ENCODE measurements at regions of chr10 and their contacts with region 1.

Region 1: GRCh38 chr10:69092959-69093850 is 5.3 kb downstream of the SRGN start:
- DNase-seq: peak; percentile 64
- CTCF ChIP-seq: peak; percentile 58

Region 2: GRCh38 chr10:68988530-68989316 is 104.5 kb before region 1 on chr10 and contains the start of gene KIFBP:
- CTCF ChIA-PET with region 1: interaction called, 14 read pairs
- POLR2A ChIA-PET with region 1: interaction called, 8 read pairs
- DNase-seq: peak; percentile 95
- CTCF ChIP-seq: peak; percentile 49

Region 3: DNA sequence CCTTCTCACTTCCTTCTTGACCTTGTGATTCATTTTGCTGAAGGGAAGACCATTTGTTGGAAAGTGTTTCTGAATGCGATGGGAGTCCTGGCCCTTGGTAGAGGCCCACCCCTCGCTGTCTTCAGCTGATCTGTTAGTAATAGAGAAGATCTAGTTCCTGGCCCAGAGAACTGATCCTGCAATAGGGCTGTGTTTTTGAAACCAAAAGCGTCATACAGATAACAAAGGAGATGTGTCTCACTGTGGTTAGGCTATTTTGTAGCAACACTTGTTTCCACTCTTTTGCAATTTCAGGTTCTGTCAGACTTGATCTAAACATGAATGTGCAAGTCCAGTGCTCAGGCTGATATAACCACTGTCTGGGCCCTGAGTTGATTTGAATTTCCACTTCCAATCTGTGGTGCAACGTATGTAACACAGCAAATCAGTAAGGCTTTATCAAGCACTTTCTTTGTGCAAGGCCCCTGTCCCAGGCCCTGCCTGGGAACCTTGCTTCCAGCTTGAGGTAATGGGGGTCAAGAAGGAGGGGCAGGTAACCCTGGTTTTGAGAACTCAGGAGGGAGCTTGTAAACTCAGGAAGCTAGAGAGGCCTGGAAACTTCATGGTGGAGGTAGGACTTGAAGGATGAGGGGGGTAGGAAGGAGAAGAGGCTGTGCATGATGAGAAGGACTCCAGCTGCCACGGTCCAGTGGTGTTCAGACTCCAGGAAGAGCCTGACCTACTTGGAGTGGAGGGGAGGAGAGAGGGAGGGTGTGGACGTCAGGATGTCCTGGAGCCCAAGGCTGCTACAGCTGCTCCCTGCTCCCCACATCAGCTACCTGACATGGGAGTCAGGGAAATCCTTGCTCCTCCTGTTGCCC is 47.5 kb before region 1 on chr10:
- CTCF ChIA-PET with region 1: interaction called, 19 read pairs
- POLR2A ChIA-PET with region 1: interaction called, 9 read pairs
- DNase-seq: peak; percentile 72
- CTCF ChIP-seq: no peak

Region 4: GRCh38 chr10:69181433-69181832 is 88.2 kb after region 1 on chr10:
- CTCF ChIA-PET with region 1: no interaction called
- POLR2A ChIA-PET with region 1: no interaction called
- DNase-seq: no peak
- CTCF ChIP-seq: no peak

Region 5: DNA sequence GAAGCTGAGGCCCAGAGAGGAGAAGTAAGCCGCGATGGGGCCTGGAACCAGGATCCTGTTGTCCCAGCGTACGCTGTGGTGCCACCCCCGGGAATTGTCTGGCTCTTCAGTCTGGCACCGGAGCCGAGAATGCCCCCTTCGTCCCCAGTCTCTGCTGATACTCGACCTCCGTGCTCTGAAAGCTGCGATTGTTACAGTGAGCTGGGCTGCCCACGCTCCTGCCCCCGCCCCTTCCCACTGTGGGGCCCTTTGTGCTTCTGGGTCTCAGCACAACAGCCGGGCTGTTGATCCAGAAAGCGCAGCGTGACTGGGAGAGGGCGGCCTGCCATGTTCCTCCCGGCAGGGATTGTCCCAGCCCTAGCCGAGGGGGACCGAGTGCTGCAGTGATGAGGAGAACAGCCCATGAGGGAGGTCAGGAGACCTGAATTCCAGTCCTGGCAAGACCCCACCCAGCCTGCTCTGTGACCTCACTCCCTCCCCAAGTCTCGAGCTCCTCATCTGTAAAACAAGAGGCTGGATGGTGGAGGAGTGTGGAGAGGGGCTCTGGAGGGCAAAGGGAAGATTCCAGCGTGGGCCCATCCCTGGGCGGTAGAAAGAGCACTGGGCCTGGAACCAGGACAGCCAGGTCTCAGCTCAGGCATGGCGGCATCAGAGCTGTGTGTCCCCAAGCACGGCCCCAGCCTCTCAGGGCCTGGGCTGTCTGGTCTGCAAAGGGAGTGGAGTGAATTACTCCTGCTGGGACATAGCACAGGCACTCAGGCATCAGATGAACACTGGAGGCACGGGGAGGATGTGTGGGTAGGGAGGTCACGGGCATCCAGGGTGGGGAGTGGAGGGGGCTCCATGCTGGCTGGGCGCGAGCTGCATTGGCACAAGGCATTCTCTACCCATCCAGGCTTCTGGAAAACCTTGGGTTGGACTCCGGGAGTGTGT is 401.7 kb after region 1 on chr10:
- CTCF ChIA-PET with region 1: no interaction called
- POLR2A ChIA-PET with region 1: no interaction called
- DNase-seq: no peak
- CTCF ChIP-seq: no peak